Transverse colon (tissue), 4 donors: ENCODE measurements at regions of chr18 and their contacts with region 1.

Region 1: GRCh38 chr18:5456577-5457463 is 87.0 kb downstream of the EPB41L3 start:
- DNase-seq: no peak
- H3K4me3 ChIP-seq: peak overlapping the region in 1 of 4 donors; percentile 15
- H3K27ac ChIP-seq: peak overlapping the region; percentile 40 to 74 (median 50)
- H3K4me1 ChIP-seq: peaks cover 0 to 4% (median 0%) of the 10 kb centered on the region in 4 donors
- H3K27me3 ChIP-seq: no peaks in the 10 kb centered on the region
- CTCF ChIP-seq: peak; percentile 33 to 55 (median 38)
- EP300 ChIP-seq: no peak
- POLR2A ChIP-seq: no peak

Region 2: DNA sequence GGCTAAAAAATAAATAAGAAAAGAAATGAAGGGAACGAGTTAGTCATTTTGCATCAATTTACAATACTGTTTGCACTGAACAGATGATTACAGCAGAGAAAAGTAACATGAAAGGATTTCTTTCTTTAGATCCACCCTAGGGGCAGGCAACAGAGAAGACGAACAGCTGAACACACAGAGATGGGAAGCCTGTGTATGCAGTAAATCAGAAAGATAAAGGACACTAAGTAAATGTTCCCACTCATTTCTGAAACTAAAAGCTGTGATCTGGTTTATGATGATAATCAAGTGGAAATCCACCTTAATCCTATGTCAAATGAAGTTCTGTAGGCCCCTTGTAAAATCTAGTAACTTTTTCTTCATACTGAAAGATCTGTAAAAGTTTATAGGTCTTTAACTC is 314.0 kb before region 1 on chr18:
- in situ Hi-C with region 1: no loop called
- intact Hi-C with region 1: no loop called
- DNase-seq: no peak
- H3K4me3 ChIP-seq: no peak overlapping the region
- H3K27ac ChIP-seq: no peak overlapping the region
- H3K4me1 ChIP-seq: no peaks in the 10 kb centered on the region
- H3K27me3 ChIP-seq: no peaks in the 10 kb centered on the region
- CTCF ChIP-seq: no peak
- EP300 ChIP-seq: no peak
- POLR2A ChIP-seq: no peak

Region 3: GRCh38 chr18:5370332-5370731 is 86.5 kb before region 1 on chr18:
- in situ Hi-C with region 1: loop called in 1 of 4 experiments (anchors 25 kb)
- intact Hi-C with region 1: no loop called
- DNase-seq: no peak
- H3K4me3 ChIP-seq: no peak overlapping the region
- H3K27ac ChIP-seq: no peak overlapping the region
- H3K4me1 ChIP-seq: no peaks in the 10 kb centered on the region
- H3K27me3 ChIP-seq: no peaks in the 10 kb centered on the region
- CTCF ChIP-seq: no peak
- EP300 ChIP-seq: no peak
- POLR2A ChIP-seq: no peak

Region 4: GRCh38 chr18:5488844-5489243 is 32.0 kb after region 1 on chr18:
- in situ Hi-C with region 1: no loop called
- intact Hi-C with region 1: no loop called
- DNase-seq: no peak
- H3K4me3 ChIP-seq: no peak overlapping the region
- H3K27ac ChIP-seq: peak overlapping the region in 3 of 4 donors; percentile 43 to 59 (median 51)
- H3K4me1 ChIP-seq: no peaks in the 10 kb centered on the region
- H3K27me3 ChIP-seq: no peaks in the 10 kb centered on the region
- CTCF ChIP-seq: no peak
- EP300 ChIP-seq: no peak
- POLR2A ChIP-seq: no peak

Region 5: GRCh38 chr18:5546660-5547059 is 89.8 kb after region 1 on chr18:
- in situ Hi-C with region 1: no loop called
- intact Hi-C with region 1: loop called (anchors 2 kb)
- DNase-seq: no peak
- H3K4me3 ChIP-seq: no peak overlapping the region
- H3K27ac ChIP-seq: no peak overlapping the region
- H3K4me1 ChIP-seq: peaks cover 0 to 14% (median 2%) of the 10 kb centered on the region in 4 donors
- H3K27me3 ChIP-seq: peaks cover 19% of the 10 kb centered on the region
- CTCF ChIP-seq: peak in 4 of 5 experiments; percentile 35 to 60 (median 40)
- EP300 ChIP-seq: no peak
- POLR2A ChIP-seq: no peak